Motor neuron (in vitro differentiated cells): ENCODE measurements at regions of chr18 and their contacts with region 1.

Region 1: GRCh38 chr18:43587538-43588153 is 310.4 kb upstream of the SYT4 start:
- ATAC-seq: peak; percentile 45 to 84 (median 70)
- H3K4me3 ChIP-seq: no peak overlapping the region
- H3K27ac ChIP-seq: no peak overlapping the region
- H3K4me1 ChIP-seq: no peaks in the 10 kb centered on the region

Region 2: GRCh38 chr18:42028247-42028832 is 1559.3 kb before region 1 on chr18:
- in situ Hi-C with region 1: loop called in 1 of 9 experiments (anchors 25 kb)
- ATAC-seq: peak in 3 of 8 experiments; percentile 34 to 49 (median 42)
- H3K4me3 ChIP-seq: no peak overlapping the region
- H3K27ac ChIP-seq: no peak overlapping the region
- H3K4me1 ChIP-seq: peaks cover 0 to 3% of the 10 kb centered on the region in 2 donors

Region 3: DNA sequence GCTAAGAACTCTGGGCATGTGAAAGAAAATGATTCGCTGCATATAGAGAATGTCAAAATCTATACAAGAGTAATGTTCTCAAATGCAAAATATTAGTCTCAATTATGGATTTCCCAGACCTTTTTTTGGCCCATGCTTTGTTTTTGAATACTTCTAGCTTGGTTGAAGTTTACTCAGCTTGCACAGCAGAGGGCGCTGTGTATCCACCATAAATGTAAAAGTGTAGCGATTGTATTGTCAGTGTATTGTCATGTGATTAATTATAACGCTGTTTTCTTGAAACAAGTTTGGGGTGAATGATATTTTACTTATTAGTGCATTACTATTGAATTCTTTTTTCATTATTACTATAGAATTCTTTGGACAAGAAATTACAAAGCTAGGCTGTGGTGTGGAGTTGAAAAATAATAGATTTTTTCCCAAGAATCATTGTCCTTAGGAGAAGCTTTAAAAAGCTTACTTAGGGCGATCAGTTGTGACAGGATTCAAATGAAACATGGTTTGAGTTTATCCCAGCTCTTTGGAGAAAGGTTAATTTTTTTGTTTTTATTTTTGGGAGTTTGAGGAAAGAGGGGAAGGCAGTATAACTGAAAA is 1534.4 kb before region 1 on chr18:
- in situ Hi-C with region 1: loop called in 4 of 9 experiments (anchors 25 kb)
- ATAC-seq: peak; percentile 59 to 92 (median 66)
- H3K4me3 ChIP-seq: no peak overlapping the region
- H3K27ac ChIP-seq: no peak overlapping the region
- H3K4me1 ChIP-seq: peaks cover 0 to 2% of the 10 kb centered on the region in 2 donors